Dendritic cell treated with granulocyte-macrophage colony-stimulating factor and Interleukin-4, amounts not matched to agents 40 ng/mL and 50 ng/mL, for 4 days (primary cell): ENCODE measurements at regions of chr14 and their contacts with region 1.

Region 1: DNA sequence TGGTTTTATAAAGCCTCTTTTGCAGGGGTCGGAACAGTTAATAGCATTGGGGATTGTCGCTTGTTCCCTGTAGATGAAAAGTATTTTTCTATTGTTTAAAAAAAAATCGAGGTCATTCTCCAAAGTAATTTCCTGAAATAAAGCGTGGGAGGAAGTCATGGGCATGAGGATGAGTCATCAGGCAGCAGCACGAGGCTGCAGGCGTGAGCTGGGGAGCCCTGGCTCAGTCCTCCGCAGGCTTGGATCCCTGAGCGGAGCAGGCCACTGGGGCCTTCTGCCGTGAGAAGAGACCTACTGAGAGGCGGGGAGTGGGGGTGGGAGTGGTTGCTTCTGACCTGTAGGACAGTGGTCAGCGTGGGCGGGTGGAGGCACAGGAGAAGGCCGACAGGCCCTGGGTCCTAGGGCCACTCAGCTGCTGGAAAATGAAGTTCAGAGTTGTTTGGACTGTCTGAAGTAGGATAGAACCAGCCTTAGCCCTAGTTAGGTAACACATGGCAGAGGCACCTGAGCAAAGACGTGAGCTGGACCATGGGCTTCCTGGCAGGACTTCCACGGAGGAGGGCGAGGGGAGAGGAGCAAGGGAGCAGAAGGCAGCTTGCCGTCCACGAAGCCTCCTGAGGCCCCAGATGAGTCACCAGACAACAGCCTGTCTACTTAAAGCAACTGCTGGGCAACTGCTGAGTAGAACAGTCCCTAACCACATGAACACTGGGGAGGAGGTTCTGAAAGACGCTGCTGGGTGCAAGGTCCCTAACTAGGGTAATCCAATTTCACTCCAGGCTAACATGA is 21.1 kb upstream of the LGALS3 start:
- H3K4me3 Mint-ChIP-seq: peak overlapping the region; percentile 55
- H3K27ac Mint-ChIP-seq: peak overlapping the region; percentile 99
- H3K4me1 Mint-ChIP-seq: peaks cover 41% of the 10 kb centered on the region
- H3K27me3 Mint-ChIP-seq: no peaks in the 10 kb centered on the region

Region 2: DNA sequence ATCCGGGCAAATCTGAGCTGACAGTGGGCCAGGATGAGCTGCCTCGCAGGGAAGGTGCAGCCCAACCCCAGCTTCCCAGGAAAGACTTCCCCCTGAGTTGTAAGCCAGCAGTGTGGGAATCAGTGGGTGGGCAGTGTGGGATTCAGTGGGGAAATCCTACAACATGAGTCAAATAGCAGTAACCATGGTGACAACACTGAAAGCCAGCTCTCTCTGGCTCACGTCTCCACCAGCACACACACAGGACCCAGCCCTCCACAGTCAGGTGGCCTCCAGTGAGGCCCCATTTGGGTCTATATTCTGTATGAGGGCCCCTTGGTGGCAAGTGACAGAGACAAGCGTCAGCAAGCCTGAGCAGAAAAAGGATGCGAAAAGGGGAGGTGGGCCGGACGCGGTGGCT is 15.1 kb after region 1 on chr14:
- intact Hi-C with region 1: loop called (anchors 2 kb)
- H3K4me3 Mint-ChIP-seq: no peak overlapping the region
- H3K27ac Mint-ChIP-seq: peak overlapping the region; percentile 83
- H3K4me1 Mint-ChIP-seq: peaks cover 89% of the 10 kb centered on the region
- H3K27me3 Mint-ChIP-seq: no peaks in the 10 kb centered on the region